CD4-positive, alpha-beta memory T cell (primary cell): ENCODE measurements at regions of chr11 and their contacts with region 1.

Region 1: GRCh38 chr11:61111786-61112517 is 9.7 kb downstream of the CD5 start:
- DNase-seq: peak; percentile 64 to 87 (median 72)
- H3K4me3 ChIP-seq: peak overlapping the region in 1 of 2 donors; percentile 20
- H3K4me3 Mint-ChIP-seq: peak overlapping the region in 5 of 8 donors; percentile 37 to 83 (median 75)
- H3K27ac ChIP-seq: peak overlapping the region; percentile 100
- H3K27ac Mint-ChIP-seq: peak overlapping the region in 5 of 7 donors; percentile 78 to 98 (median 89)
- H3K4me1 ChIP-seq: peaks cover 100% of the 10 kb centered on the region
- H3K4me1 Mint-ChIP-seq: peaks cover 0 to 100% (median 82%) of the 10 kb centered on the region in 4 donors
- H3K27me3 ChIP-seq: no peaks in the 10 kb centered on the region
- H3K27me3 Mint-ChIP-seq: no peaks in the 10 kb centered on the region

Region 2: DNA sequence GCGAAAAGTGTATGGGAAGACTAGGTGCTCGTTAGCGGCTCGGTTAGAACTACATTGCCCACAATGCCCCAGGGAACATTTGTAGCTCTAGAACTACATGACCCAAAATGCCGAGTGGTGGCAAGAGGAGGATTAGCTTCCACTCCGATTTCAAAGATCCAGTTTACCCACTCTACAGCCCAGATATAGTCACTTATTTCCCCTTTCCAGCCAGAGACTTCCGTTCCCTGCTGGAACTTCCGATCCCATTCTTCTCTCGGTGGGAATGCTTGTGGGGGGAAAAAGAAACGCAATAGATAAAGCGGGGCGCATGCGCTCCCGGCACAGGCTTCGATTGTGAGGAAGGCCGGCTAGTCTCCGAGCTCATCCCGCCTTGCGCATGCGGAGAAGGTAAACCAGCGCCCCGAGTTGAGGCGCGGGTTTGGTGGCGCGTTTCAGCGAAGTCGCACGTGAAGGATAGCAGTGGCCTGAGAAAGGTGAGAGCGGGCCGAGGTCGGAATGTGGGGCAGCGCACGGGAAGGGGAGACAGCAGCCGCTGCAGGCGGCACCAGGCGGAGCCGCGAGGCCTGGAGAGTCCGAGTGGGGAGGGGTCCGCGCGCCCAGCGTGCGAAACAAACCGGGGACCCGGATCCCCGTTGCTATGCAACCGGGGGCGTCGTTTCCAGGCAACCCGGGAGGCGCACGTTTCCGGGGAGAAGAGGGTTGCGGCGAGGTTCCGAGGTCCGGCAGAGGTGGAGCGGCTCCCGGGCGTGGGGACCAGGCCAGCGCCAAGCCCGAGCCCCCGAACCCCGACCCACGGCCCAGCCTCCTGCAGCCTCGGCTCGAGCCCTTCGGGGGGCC is 197.9 kb before region 1 on chr11 and contains the start of gene TMEM109:
- CTCF ChIA-PET with region 1: interaction called, 6 read pairs
- POLR2A ChIA-PET with region 1: interaction called, 12 read pairs
- intact Hi-C with region 1: no loop called
- DNase-seq: peak; percentile 90 to 92 (median 91)
- H3K4me3 ChIP-seq: peak within 1 kb of the TSS; percentile 79 to 96
- H3K4me3 Mint-ChIP-seq: peak within 1 kb of the TSS; percentile 92 to 100 (median 98)
- H3K27ac ChIP-seq: peak within 1 kb of the TSS; percentile 96
- H3K27ac Mint-ChIP-seq: peak within 1 kb of the TSS; percentile 87 to 99 (median 98)
- H3K4me1 ChIP-seq: peaks cover 47% of the 10 kb centered on the region
- H3K4me1 Mint-ChIP-seq: peaks cover 31 to 65% (median 44%) of the 10 kb centered on the region in 4 donors
- H3K27me3 ChIP-seq: no peaks in the 10 kb centered on the region
- H3K27me3 Mint-ChIP-seq: no peaks in the 10 kb centered on the region
- total RNA-seq, gene TMEM109: 66.9 to 68.0 TPM

Region 3: GRCh38 chr11:60992842-60993409 is 119.0 kb before region 1 on chr11:
- CTCF ChIA-PET with region 1: no interaction called
- POLR2A ChIA-PET with region 1: interaction called, 56 read pairs
- intact Hi-C with region 1: loop called (anchors 5 kb)
- DNase-seq: peak in 1 of 5 donors; percentile 7
- H3K4me3 ChIP-seq: no peak overlapping the region
- H3K4me3 Mint-ChIP-seq: peak overlapping the region; percentile 34 to 81 (median 78)
- H3K27ac ChIP-seq: peak overlapping the region; percentile 51
- H3K27ac Mint-ChIP-seq: peak overlapping the region; percentile 84 to 96 (median 94)
- H3K4me1 ChIP-seq: peaks cover 92% of the 10 kb centered on the region
- H3K4me1 Mint-ChIP-seq: peaks cover 53 to 86% (median 72%) of the 10 kb centered on the region in 4 donors
- H3K27me3 ChIP-seq: no peaks in the 10 kb centered on the region
- H3K27me3 Mint-ChIP-seq: no peaks in the 10 kb centered on the region

Region 4: DNA sequence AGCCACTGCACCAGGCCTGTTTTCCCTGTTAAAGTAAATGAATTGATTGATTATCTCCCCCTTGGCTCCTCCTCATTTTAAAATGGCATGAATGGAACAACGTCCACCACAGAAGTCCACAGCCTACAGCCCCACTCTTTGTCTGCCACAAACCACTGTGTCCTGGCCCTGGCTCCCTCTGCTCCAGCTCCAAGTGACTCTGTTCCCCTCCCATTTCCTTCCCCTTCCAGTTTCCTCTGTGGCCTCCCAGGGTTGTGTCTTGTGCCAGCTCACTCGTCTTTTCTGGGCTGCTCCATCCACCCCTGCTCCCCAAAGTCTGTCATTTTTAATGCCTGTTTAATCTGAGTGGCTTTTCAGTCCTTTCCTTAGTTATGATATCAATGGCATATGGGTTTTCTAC is 62.1 kb before region 1 on chr11:
- CTCF ChIA-PET with region 1: no interaction called
- POLR2A ChIA-PET with region 1: interaction called, 88 read pairs
- intact Hi-C with region 1: no loop called
- DNase-seq: no peak
- H3K4me3 ChIP-seq: no peak overlapping the region
- H3K4me3 Mint-ChIP-seq: peak overlapping the region in 2 of 8 donors; percentile 41 to 63
- H3K27ac ChIP-seq: no peak overlapping the region
- H3K27ac Mint-ChIP-seq: peak overlapping the region; percentile 26 to 84 (median 71)
- H3K4me1 ChIP-seq: peaks cover 50% of the 10 kb centered on the region
- H3K4me1 Mint-ChIP-seq: peaks cover 36 to 71% (median 44%) of the 10 kb centered on the region in 4 donors
- H3K27me3 ChIP-seq: no peaks in the 10 kb centered on the region
- H3K27me3 Mint-ChIP-seq: no peaks in the 10 kb centered on the region

Region 5: DNA sequence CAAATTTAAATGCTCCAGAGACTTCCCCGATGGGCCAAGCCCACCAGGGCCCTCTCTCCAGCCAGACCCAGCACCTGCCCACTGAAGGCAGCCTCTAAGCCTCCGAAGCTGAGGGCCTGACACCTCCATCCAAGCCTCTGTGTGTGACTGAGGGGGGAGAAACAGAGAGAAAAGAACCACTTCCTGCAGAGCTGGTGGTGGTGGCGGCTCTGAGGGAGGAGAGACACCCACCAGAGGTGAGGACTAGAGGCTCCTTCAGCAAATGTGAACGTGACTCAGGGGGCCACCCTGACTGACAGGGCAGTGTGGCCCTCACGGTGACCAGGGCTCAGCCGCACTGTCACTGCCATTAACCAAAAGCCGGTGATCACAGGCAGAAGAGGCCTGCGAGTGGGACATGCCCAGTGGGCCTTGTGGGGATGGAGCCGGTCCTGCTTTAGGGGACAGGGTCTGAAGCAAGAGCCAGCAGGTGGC is 40.7 kb before region 1 on chr11:
- CTCF ChIA-PET with region 1: interaction called, 12 read pairs
- POLR2A ChIA-PET with region 1: interaction called, 173 read pairs
- intact Hi-C with region 1: loop called (anchors 5 kb)
- DNase-seq: peak; percentile 61 to 77 (median 72)
- H3K4me3 ChIP-seq: peak overlapping the region in 1 of 2 donors; percentile 21
- H3K4me3 Mint-ChIP-seq: peak overlapping the region; percentile 60 to 89 (median 79)
- H3K27ac ChIP-seq: peak overlapping the region; percentile 63
- H3K27ac Mint-ChIP-seq: peak overlapping the region; percentile 92 to 98 (median 96)
- H3K4me1 ChIP-seq: peaks cover 98% of the 10 kb centered on the region
- H3K4me1 Mint-ChIP-seq: peaks cover 50 to 92% (median 74%) of the 10 kb centered on the region in 4 donors
- H3K27me3 ChIP-seq: no peaks in the 10 kb centered on the region
- H3K27me3 Mint-ChIP-seq: no peaks in the 10 kb centered on the region

Region 6: DNA sequence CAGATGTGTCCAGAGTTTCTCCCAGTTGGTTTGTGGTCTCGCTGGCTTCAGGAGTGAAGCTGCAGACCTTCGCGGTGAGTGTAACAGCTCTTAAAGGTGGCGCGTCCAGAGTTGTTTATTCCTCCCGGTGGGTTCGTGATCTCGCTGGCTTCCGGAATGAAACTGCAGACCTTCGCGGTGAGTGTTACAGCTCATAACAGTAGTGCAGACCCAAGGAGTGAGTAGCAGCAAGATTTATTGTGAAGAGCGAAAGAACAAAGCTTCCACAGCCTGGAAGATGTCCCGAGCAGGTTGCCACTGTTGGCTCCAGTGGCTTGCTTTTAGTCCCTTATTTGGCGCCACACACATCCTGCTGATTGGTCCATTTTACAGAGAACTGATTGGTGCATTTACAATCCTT is 89.5 kb after region 1 on chr11:
- CTCF ChIA-PET with region 1: no interaction called
- POLR2A ChIA-PET with region 1: no interaction called
- intact Hi-C with region 1: no loop called
- DNase-seq: no peak
- H3K4me3 ChIP-seq: no peak overlapping the region
- H3K4me3 Mint-ChIP-seq: no peak overlapping the region
- H3K27ac ChIP-seq: no peak overlapping the region
- H3K27ac Mint-ChIP-seq: no peak overlapping the region
- H3K4me1 ChIP-seq: no peaks in the 10 kb centered on the region
- H3K4me1 Mint-ChIP-seq: peaks cover 0 to 1% (median 0%) of the 10 kb centered on the region in 4 donors
- H3K27me3 ChIP-seq: no peaks in the 10 kb centered on the region
- H3K27me3 Mint-ChIP-seq: peaks cover 16 to 26% of the 10 kb centered on the region in 2 donors